ENCODE measurements at regions of chr11 and their contacts with region 1.

Region 1: GRCh38 chr11:2892215-2893020 is 6.8 kb upstream of the CDKN1C start:
- DNase-seq: no peak
- ATAC-seq: peak in 1 of 2 donors; percentile 25
- H3K4me3 ChIP-seq: peak overlapping the region; percentile 32 to 47 (median 36)
- H3K27ac ChIP-seq: peak overlapping the region in 3 of 4 donors; percentile 23 to 31 (median 29)
- H3K4me1 ChIP-seq: peaks cover 5 to 12% of the 10 kb centered on the region in 2 donors
- H3K27me3 ChIP-seq: no peaks in the 10 kb centered on the region
- CTCF ChIP-seq: peak; percentile 80 to 93 (median 92)
- POLR2A ChIP-seq: no peak

Region 2: DNA sequence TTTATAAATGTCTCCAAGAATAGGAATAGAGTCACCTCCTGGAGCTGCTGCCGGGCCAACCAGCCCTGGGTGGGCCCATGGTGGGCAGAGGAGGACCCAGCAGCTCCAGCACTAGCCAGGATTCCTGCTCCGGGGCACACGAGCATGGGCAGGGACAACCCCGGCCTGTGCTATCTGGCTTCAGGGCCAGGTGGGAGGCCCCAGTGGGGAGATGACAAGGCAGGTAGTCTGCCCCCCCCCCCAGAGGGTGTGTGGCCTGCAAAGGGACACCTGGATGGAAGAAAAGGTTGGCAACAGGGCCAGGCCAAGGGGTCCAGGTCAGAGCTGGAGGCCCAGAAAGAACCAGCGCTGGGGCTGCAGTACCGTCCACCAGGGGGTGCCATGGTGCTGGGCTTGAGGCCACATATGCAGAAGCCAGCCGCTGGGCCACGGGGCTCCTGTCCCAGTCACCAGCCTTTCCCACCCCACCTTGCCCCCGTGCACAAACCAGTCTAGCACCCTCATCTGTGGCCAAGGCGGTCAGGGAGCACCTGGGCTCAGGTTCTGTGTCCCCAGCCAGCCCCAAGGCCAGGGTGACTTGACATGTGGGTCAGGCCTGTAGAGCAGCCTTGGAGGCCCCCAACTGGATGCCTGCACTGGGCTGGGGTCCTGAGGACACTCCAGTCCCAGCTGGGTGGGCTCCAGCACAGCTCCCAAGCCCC is 587.1 kb before region 1 on chr11:
- in situ Hi-C with region 1: no loop called
- intact Hi-C with region 1: loop called (anchors 10 kb)
- DNase-seq: peak; percentile 59 to 64
- ATAC-seq: peak; percentile 68 to 86
- H3K4me3 ChIP-seq: no peak overlapping the region
- H3K27ac ChIP-seq: no peak overlapping the region
- H3K4me1 ChIP-seq: peaks cover 0 to 7% of the 10 kb centered on the region in 2 donors
- H3K27me3 ChIP-seq: no peaks in the 10 kb centered on the region
- CTCF ChIP-seq: peak; percentile 70 to 94 (median 93)
- POLR2A ChIP-seq: no peak

Region 3: DNA sequence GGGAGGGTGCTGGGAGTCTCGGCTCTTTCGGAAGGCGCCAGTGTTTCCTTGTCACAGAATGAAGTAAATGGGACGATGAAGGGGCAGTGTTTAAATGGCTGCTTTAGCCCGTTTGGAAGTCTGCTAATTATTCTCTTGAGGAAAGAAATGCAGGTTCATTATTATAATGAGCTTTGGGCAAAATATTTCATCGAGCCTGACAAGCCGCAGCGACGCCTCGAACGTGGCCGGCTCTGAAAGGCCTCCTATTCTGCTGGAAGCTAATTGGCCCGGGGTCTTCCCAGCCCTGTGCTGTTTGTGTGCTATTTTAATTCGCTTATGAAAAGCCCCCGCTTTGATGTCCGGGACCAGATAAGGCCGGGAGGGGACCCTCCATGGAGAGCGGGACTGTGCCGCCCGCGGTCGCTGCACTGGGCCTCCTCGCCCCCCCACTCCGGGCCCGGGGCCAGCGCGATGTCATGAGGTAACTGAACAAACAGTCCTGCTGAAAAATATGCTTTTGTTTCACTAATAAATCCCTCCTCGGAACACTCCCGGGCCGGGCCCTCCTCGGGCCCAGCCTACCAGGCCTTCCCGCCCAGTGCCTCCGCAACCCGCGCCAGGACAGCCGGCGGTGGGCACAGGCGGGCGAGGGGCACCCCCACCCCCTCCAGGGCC is 85.3 kb before region 1 on chr11:
- in situ Hi-C with region 1: no loop called
- intact Hi-C with region 1: no loop called
- DNase-seq: peak; percentile 15 to 37
- ATAC-seq: peak in 1 of 2 donors; percentile 48
- H3K4me3 ChIP-seq: no peak overlapping the region
- H3K27ac ChIP-seq: peak overlapping the region; percentile 43 to 65 (median 62)
- H3K4me1 ChIP-seq: peaks cover 7 to 12% of the 10 kb centered on the region in 2 donors
- H3K27me3 ChIP-seq: peaks cover 4 to 11% (median 10%) of the 10 kb centered on the region in 3 donors
- CTCF ChIP-seq: no peak
- POLR2A ChIP-seq: no peak

Region 4: DNA sequence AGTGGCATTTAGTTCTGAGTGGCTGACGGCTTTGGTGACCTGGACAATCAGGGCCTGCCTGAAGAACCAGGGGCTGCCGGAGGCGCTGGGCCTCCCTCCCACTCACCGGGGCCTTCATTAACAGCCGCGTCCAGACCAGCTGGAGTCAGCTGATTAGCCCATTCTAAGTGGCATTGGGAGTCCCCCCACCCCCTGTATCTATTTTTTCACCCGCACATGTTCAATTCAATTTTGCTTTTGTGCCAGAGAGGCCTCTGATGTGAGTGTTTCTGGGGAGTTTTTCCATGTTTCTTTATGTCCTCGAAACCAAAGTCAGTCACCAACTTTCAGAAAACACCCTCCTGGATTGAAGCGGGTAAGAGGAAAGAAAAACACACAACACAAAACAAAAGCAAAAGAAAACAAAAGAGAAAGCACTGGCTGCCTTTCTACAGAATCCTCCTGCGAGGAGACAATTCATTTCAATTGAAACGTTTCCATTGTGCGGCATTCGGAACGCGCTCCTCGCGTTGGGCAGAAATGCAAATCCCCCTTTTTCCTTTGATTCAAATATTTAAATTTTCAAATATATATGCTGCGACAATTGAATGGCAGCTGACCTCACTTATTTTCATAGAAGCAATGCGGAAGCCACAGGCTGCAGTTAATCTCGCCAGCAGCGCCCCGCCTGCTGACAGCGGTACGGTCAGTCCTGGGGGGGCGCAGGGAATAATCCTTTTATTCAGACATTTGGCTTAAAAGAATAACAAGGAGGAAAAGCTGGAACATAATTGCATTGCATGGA is 24.5 kb before region 1 on chr11:
- in situ Hi-C with region 1: no loop called
- intact Hi-C with region 1: no loop called
- DNase-seq: no peak
- ATAC-seq: no peak
- H3K4me3 ChIP-seq: peak overlapping the region in 1 of 4 donors; percentile 23
- H3K27ac ChIP-seq: no peak overlapping the region
- H3K4me1 ChIP-seq: no peaks in the 10 kb centered on the region
- H3K27me3 ChIP-seq: peaks cover 34 to 48% (median 35%) of the 10 kb centered on the region in 3 donors
- CTCF ChIP-seq: no peak
- POLR2A ChIP-seq: no peak

Measured in gastrocnemius medialis (tissue), 4 donors.